ENCODE measurements at regions of chr1 and their contacts with region 1.

Region 1: DNA sequence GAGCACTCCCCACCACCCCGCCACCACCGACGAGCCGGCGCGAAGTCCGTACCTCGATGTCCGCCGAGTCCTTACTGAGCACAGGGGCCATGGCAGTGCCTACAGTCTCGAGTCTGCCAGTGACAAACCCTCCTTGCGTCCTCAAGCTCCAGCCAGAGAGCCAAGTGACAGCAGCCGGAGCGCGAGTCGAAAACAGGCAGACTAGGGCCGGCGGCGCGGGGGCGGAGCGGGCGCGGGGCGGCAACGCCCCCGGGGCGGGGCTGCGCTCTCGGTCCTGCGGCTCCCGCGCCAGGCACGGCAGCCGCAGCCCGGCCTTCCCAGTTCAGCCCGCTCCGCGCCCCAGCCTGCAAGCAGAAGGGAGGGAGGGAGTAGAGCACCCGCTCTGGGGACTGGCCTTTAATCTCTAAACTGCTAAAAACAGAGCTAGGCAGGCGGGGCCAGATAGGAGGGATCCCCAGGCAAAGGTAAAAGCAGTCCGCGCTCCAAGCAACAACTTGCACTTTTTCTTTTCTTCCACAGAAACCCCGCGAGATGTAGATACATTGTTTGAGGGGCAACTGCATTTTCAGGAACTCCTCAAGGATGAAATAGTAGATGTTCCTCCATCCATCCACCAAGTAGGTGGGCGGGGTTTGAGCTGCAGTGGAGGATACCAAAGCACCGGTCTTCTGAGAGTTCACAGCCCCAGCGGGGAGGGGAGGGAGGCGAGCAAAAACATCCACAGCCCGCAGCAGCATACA is at the start of gene DPYD:
- DNase-seq: peak; percentile 39 to 93 (median 88)
- H3K4me3 ChIP-seq: peak within 1 kb of the TSS; percentile 71 to 94 (median 84)
- H3K27ac ChIP-seq: peak within 1 kb of the TSS; percentile 76 to 97 (median 93)
- H3K27me3 ChIP-seq: no peaks in the 10 kb centered on the region
- CTCF ChIP-seq: peak in 7 of 56 donors; percentile 1 to 49 (median 10)
- total RNA-seq, gene DPYD: 20.5 to 78.6 (median 34.9) TPM

Region 2: GRCh38 chr1:97832481-97832880 is 88.5 kb before region 1 on chr1:
- intact Hi-C with region 1: loop called in 1 of 2 experiments (anchors 10 kb)
- DNase-seq: no peak
- H3K4me3 ChIP-seq: no peak overlapping the region
- H3K27ac ChIP-seq: no peak overlapping the region
- H3K27me3 ChIP-seq: no peaks in the 10 kb centered on the region
- CTCF ChIP-seq: no peak

Region 3: DNA sequence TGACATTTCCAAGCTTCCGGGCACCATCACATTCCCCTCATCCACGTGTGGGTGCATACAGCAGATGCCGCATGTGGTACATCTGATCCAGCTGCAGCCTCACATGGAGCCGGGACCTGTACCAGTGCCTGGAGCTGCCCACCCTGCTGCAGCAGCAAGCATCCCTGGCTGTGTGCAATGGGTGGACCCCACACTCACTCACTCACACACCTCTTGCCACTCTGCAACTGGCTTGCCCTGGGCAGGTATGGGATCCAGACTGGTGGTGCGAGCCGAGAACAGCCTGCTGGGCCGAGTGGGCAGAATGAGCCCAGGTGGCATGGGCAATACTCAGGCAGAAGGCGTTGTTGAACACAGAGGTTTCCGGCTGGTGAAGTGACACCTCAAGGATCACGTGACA is 75.2 kb before region 1 on chr1:
- intact Hi-C with region 1: no loop called
- DNase-seq: no peak
- H3K4me3 ChIP-seq: no peak overlapping the region
- H3K27ac ChIP-seq: no peak overlapping the region
- H3K27me3 ChIP-seq: no peaks in the 10 kb centered on the region
- CTCF ChIP-seq: no peak

Region 4: GRCh38 chr1:97936976-97937375 is 16.0 kb after region 1 on chr1:
- intact Hi-C with region 1: loop called in 1 of 2 experiments (anchors 2 kb)
- DNase-seq: peak in 8 of 10 donors; percentile 30 to 83 (median 60)
- H3K4me3 ChIP-seq: peak overlapping the region in 6 of 59 donors; percentile 0 to 46 (median 18)
- H3K27ac ChIP-seq: peak overlapping the region in 57 of 59 donors; percentile 20 to 92 (median 80)
- H3K27me3 ChIP-seq: no peaks in the 10 kb centered on the region
- CTCF ChIP-seq: peak in 3 of 56 donors; percentile 11 to 27 (median 22)

Region 5: DNA sequence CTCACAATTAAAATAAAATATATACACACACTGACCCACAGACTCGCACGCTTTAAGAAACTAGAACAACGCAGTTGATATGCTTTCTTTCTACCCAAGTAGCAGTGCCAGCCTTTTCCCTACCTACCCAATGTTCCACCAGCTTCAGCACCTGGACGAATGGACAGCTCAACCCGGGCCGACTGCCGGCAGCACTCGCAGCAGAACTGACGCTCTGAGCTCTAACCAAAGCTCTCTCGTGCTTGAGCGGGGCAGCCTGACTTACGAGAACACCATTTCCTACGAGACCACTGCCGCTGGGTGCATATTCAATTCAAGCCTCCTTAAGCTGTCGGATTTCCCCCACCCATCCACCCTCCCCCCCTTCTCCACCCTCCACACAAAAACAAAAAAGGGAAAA is 127.2 kb after region 1 on chr1:
- intact Hi-C with region 1: loop called in 1 of 2 experiments (anchors 5 kb)
- DNase-seq: peak in 9 of 10 donors; percentile 67 to 85 (median 76)
- H3K4me3 ChIP-seq: peak overlapping the region; percentile 30 to 81 (median 60)
- H3K27ac ChIP-seq: peak overlapping the region in 53 of 59 donors; percentile 9 to 90 (median 78)
- H3K27me3 ChIP-seq: peaks cover 0 to 44% (median 7%) of the 10 kb centered on the region in 45 donors
- CTCF ChIP-seq: peak in 42 of 56 donors; percentile 8 to 55 (median 26)

Measured in dorsolateral prefrontal cortex (tissue), 120 donors.